Stomach (tissue), 19 donors: ENCODE measurements at regions of chr7 and their contacts with region 1.

Region 1: GRCh38 chr7:101602484-101603241 is 26.4 kb downstream of the MYL10 start:
- DNase-seq: peak; percentile 84 to 94
- H3K4me3 ChIP-seq: no peak overlapping the region
- H3K27ac ChIP-seq: peak overlapping the region in 1 of 5 donors; percentile 49
- H3K4me1 ChIP-seq: peaks cover 0 to 25% (median 21%) of the 10 kb centered on the region in 4 donors
- H3K27me3 ChIP-seq: peaks cover 0 to 18% (median 0%) of the 10 kb centered on the region in 3 donors
- CTCF ChIP-seq: peak in 5 of 7 experiments; percentile 65 to 86 (median 79)
- EP300 ChIP-seq: no peak
- POLR2A ChIP-seq: no peak

Region 2: DNA sequence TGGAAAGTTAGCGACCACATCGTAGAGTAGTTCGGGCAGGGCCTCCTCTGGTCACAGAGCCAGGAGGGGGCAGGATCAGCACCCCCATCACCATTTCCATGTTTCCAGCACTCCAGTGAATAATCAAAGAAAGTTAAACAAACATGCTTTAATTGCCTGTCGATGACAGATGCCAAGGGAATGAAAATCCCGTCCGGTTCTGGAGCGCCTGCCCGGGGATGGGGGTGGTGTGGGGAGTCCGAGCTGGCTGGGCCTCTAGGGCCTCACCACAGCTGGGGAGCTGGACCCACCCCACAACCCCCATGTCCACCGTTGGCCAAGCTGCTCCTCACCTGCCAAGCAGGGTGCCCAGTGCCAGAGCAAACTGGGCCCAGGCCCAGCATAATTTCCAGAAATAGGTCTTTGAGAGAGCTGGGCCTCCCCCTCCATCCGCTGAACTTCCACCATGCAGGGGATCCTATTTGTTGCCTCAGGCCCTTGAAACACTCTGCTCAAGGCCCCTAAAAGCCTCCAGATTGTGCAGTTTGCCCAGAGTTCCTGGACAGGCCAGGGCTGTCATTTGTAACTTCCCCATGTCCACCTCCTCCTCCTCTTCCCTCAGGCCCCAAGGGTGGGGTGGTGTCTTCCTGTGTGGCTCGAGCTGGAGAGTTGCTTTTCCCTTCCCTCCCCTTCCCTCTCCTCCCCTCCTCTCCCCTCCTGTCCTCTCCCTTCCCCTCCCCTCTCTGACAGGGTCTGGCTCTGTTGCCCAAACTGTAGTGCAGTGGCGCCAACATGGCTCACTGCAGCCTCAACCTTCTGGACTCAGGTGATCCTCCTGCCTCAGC is 74.6 kb before region 1 on chr7:
- intact Hi-C with region 1: no loop called
- DNase-seq: peak in 1 of 2 donors; percentile 59
- H3K4me3 ChIP-seq: no peak overlapping the region
- H3K27ac ChIP-seq: no peak overlapping the region
- H3K4me1 ChIP-seq: peaks cover 0 to 11% (median 6%) of the 10 kb centered on the region in 4 donors
- H3K27me3 ChIP-seq: peaks cover 0 to 4% (median 0%) of the 10 kb centered on the region in 3 donors
- CTCF ChIP-seq: no peak
- EP300 ChIP-seq: no peak
- POLR2A ChIP-seq: no peak

Region 3: DNA sequence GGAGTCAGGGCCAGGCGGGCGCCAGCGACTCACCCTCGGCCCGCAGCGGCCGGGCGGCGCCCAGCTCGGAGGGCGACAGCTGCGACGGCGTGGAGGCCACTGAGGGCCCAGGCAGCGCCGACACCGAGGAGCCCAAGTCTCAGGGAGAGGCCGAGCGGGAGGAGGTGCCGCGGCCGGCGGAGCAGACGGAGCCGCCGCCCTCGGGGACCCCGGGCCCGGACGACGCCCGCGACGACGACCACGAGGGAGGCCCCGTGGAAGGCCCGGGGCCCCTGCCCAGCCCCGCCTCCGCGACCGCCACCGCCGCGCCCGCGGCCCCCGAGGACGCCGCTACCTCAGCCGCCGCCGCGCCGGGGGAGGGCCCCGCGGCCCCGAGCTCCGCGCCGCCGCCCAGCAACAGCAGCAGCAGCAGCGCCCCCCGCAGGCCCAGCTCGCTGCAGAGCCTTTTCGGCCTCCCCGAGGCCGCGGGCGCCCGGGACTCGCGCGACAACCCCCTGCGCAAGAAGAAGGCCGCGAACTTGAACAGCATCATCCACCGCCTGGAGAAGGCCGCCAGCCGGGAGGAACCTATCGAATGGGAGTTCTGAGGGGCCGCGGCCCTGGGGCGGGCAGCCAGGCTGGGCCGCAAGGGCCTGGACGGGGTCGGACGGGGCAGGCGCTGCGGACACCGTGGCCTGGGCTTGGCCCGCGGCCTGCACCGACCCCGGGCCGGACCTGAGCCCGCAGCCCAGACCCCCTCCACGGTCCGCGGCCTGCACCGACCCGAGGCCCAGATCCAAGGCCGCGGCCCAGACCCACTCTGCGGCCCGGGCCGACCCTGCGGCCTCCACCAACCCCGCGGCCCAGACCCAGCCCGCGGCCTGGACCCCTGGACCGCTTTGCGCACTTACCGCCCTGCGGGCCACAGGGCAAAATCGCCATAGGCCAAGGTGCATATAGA is 646.1 kb after region 1 on chr7:
- intact Hi-C with region 1: loop called (anchors 5 kb)
- DNase-seq: no peak
- H3K4me3 ChIP-seq: no peak overlapping the region
- H3K27ac ChIP-seq: no peak overlapping the region
- H3K4me1 ChIP-seq: no peaks in the 10 kb centered on the region
- H3K27me3 ChIP-seq: no peaks in the 10 kb centered on the region
- CTCF ChIP-seq: no peak
- EP300 ChIP-seq: no peak
- POLR2A ChIP-seq: no peak